ENCODE measurements at regions of chr5 and their contacts with region 1.

Region 1: GRCh38 chr5:177086924-177087706 is 400 bp downstream of the FGFR4 start:
- DNase-seq: peak; percentile 99
- H3K4me3 Mint-ChIP-seq: peak overlapping the region; percentile 96
- H3K27ac Mint-ChIP-seq: peak overlapping the region; percentile 90
- H3K4me1 Mint-ChIP-seq: peaks cover 42% of the 10 kb centered on the region
- H3K27me3 Mint-ChIP-seq: no peaks in the 10 kb centered on the region
- CTCF ChIP-seq: peak; percentile 98

Region 2: GRCh38 chr5:177071666-177072385 is 15.3 kb before region 1 on chr5:
- CTCF ChIA-PET with region 1: interaction called, 34 read pairs
- intact Hi-C with region 1: no loop called
- DNase-seq: peak; percentile 87
- H3K4me3 Mint-ChIP-seq: no peak overlapping the region
- H3K27ac Mint-ChIP-seq: no peak overlapping the region
- H3K4me1 Mint-ChIP-seq: peaks cover 11% of the 10 kb centered on the region
- H3K27me3 Mint-ChIP-seq: no peaks in the 10 kb centered on the region
- CTCF ChIP-seq: peak; percentile 79

Region 3: GRCh38 chr5:177100714-177101121 is 13.6 kb after region 1 on chr5:
- CTCF ChIA-PET with region 1: interaction called, 13 read pairs
- intact Hi-C with region 1: no loop called
- DNase-seq: no peak
- H3K4me3 Mint-ChIP-seq: no peak overlapping the region
- H3K27ac Mint-ChIP-seq: peak overlapping the region; percentile 74
- H3K4me1 Mint-ChIP-seq: peaks cover 19% of the 10 kb centered on the region
- H3K27me3 Mint-ChIP-seq: no peaks in the 10 kb centered on the region
- CTCF ChIP-seq: no peak

Measured in Calu3 (cell line).